ENCODE measurements at regions of chr1 and their contacts with region 1.

Region 1: DNA sequence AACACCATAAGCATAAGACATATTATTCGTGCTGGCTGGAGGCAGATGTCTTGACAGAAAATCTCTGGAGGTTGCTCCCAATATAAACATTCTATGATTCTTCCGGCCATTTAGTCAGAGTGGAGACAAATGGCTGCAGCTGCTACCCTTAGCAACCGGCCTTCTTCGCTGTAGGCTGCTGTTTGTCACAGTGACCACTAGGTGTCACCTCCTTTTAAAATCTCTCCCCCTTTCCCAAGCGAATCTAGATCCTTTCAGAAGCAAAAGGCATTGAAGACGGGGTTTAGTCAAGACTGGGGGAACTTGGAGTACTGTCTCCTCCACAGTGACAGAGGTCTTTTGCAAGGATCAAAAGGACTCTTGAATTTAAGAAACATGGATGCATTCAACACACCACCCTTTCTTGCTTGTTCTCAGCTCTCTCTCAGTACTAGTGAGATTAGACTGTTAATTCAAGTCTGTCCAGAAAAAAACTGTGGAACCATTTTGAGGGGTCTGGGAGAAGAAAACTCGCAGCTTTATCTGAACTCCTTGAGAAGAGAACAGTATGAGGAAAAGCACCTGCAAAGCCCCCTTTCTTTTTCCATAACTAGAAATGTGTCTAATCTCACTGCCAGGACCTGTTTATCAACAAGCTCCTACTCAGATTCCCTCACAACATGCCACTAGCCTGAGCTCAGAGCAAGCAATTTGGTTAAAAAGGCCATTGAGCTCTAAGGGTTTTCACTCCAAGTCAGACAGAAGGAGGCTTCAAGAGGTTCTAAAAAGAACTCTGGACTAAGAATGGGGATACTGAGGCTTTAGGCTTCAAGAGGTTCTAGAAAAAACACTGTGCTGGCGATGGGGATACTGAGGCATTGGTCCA is 408.3 kb upstream of the PLXNA2 start:
- DNase-seq: peak; percentile 50
- H3K4me3 ChIP-seq: no peak overlapping the region
- H3K27ac ChIP-seq: no peak overlapping the region
- H3K4me1 ChIP-seq: no peaks in the 10 kb centered on the region
- H3K27me3 ChIP-seq: no peaks in the 10 kb centered on the region
- CTCF ChIP-seq: peak; percentile 80

Region 2: DNA sequence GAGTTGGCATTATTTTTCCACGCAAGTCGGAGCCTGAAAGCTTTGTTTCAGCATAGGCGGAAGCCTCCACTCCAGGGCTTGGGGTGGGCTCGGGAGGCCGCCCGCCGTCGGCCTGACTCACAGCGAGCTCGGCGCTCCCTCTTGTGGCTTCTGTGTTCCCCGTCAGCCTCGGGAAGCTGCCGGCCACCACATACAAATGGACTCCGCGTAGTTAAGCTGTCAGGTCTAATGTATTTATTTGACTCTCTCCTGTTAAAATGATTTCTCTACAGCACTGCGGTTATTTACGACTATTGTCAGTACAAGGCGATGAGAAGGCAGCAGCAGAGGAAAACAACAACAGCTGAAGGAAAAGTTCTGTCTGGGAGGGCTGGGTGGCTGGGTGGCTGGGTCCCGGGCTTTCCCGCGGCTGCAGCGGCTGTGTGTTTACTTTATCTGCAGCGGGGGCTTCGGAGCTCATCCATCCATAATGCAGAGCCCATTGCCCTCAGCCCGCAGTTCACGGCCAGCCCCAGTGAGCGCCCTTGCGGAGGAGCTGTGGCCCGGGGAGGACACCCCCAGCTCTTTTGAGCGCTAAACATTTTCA is 555.3 kb after region 1 on chr1:
- intact Hi-C with region 1: loop called (anchors 5 kb)
- DNase-seq: peak; percentile 47
- H3K4me3 ChIP-seq: no peak overlapping the region
- H3K27ac ChIP-seq: no peak overlapping the region
- H3K4me1 ChIP-seq: peaks cover 4% of the 10 kb centered on the region
- H3K27me3 ChIP-seq: peaks cover 3% of the 10 kb centered on the region
- CTCF ChIP-seq: peak; percentile 71

Region 3: GRCh38 chr1:209248649-209249279 is 596.2 kb after region 1 on chr1:
- intact Hi-C with region 1: loop called (anchors 5 kb)
- DNase-seq: peak; percentile 55
- H3K4me3 ChIP-seq: no peak overlapping the region
- H3K27ac ChIP-seq: no peak overlapping the region
- H3K4me1 ChIP-seq: no peaks in the 10 kb centered on the region
- H3K27me3 ChIP-seq: no peaks in the 10 kb centered on the region
- CTCF ChIP-seq: peak; percentile 90

Measured in colonic mucosa (tissue), 4 donors.